ENCODE measurements at regions of chr1 and their contacts with region 1.

Region 1: GRCh38 chr1:204059970-204060369 is 12.9 kb upstream of the SOX13 start:
- DNase-seq: no peak
- ATAC-seq: no peak
- H3K4me3 ChIP-seq: no peak overlapping the region
- H3K27ac ChIP-seq: no peak overlapping the region
- H3K4me1 ChIP-seq: no peaks in the 10 kb centered on the region
- H3K27me3 ChIP-seq: no peaks in the 10 kb centered on the region
- CTCF ChIP-seq: no peak

Region 2: DNA sequence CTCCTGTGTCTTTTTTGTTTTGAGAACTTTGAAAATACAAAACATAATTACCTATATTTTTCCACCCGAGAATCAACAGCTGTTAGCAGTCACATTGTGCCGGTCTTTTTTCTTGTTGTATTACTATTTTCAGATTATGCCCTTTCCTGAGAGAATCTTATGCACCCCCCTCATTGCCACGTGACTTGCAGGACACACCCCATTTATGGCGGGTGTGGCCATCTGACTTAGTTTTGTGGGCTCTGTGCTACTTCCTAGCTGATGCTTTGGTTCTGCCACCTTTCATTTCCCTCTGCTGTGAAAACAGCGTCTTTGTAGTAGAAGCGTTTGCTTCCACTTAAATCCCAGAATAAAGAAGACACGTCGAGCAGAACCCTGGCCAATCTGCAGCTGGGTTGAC is 69.9 kb before region 1 on chr1:
- CTCF ChIA-PET with region 1: no interaction called
- POLR2A ChIA-PET with region 1: interaction called, 10 read pairs
- in situ Hi-C with region 1: no loop called
- intact Hi-C with region 1: no loop called
- DNase-seq: no peak
- ATAC-seq: no peak
- H3K4me3 ChIP-seq: no peak overlapping the region
- H3K27ac ChIP-seq: no peak overlapping the region
- H3K4me1 ChIP-seq: no peaks in the 10 kb centered on the region
- H3K27me3 ChIP-seq: no peaks in the 10 kb centered on the region
- CTCF ChIP-seq: no peak

Region 3: GRCh38 chr1:204092632-204093420 is 32.9 kb after region 1 on chr1:
- CTCF ChIA-PET with region 1: no interaction called
- POLR2A ChIA-PET with region 1: interaction called, 11 read pairs
- in situ Hi-C with region 1: no loop called
- intact Hi-C with region 1: no loop called
- DNase-seq: no peak
- ATAC-seq: no peak
- H3K4me3 ChIP-seq: no peak overlapping the region
- H3K27ac ChIP-seq: no peak overlapping the region
- H3K4me1 ChIP-seq: peaks cover 41% of the 10 kb centered on the region
- H3K27me3 ChIP-seq: no peaks in the 10 kb centered on the region
- CTCF ChIP-seq: no peak

Region 4: GRCh38 chr1:204145033-204145504 is 85.1 kb after region 1 on chr1:
- CTCF ChIA-PET with region 1: no interaction called
- POLR2A ChIA-PET with region 1: no interaction called
- in situ Hi-C with region 1: no loop called
- intact Hi-C with region 1: no loop called
- DNase-seq: no peak
- ATAC-seq: no peak
- H3K4me3 ChIP-seq: no peak overlapping the region
- H3K27ac ChIP-seq: no peak overlapping the region
- H3K4me1 ChIP-seq: no peaks in the 10 kb centered on the region
- H3K27me3 ChIP-seq: no peaks in the 10 kb centered on the region
- CTCF ChIP-seq: no peak

Measured in Panc1 (cell line).